ENCODE measurements at regions of chr16 and their contacts with region 1.

Region 1: GRCh38 chr16:4116337-4117249 is at the start of gene ADCY9:
- DNase-seq: peak in 41 of 42 donors; percentile 19 to 88 (median 78)

Region 2: GRCh38 chr16:4053301-4053845 is 63.2 kb before region 1 on chr16:
- intact Hi-C with region 1: loop called (anchors 10 kb)
- DNase-seq: peak; percentile 52 to 87 (median 73)

Region 3: DNA sequence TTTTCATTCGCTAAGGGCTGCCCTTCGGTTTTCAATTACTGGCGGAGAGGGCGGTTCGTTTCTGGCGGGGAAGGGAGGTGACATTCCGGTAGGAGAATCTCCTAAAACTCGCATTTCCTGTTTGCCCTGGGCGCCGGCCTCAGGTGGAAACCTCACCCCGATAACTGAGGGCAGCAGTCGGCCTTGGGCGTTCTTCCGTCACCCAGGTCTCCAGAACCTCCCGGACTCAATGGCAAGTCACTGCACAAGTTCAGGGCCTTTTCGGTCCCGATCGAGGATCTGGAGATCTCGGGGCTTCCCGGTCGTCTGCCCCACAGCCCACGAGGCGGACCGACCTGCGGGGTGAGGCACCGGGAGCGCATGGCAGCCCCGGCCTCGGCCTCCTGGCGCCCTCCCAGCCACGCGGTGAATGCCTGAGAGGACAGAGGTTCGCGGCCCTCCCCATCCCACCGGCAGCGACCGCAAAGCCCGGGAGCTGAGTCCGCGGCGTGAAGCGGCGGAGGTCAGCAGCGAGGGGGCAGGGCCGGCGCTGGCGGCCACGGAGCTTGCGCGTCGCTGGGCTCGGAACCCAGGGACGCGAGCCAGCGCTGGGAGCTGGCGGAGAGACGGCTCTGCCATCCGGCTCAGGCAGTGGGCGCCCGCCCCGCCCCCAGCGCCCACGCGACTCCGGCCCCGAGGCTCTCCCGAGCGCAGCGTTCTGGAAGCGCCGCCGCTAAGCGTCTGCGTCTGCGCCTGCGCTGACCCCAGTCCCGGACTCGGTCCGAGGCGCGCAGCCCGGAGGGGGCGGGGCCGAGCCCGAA is 66.8 kb after region 1 on chr16:
- intact Hi-C with region 1: loop called (anchors 5 kb)
- DNase-seq: peak; percentile 71 to 97 (median 90)

Region 4: GRCh38 chr16:4253394-4254150 is 137.0 kb after region 1 on chr16:
- intact Hi-C with region 1: loop called (anchors 5 kb)
- DNase-seq: peak; percentile 95 to 100 (median 98)